Activated CD4-positive, alpha-beta T cell treated with anti-CD3 and anti-CD28 coated beads, Interleukin-2, amount 10 ng/mL, durations not matched to agents 24 days and 14 days (primary cell): ENCODE measurements at regions of chr18 and their contacts with region 1.

Region 1: DNA sequence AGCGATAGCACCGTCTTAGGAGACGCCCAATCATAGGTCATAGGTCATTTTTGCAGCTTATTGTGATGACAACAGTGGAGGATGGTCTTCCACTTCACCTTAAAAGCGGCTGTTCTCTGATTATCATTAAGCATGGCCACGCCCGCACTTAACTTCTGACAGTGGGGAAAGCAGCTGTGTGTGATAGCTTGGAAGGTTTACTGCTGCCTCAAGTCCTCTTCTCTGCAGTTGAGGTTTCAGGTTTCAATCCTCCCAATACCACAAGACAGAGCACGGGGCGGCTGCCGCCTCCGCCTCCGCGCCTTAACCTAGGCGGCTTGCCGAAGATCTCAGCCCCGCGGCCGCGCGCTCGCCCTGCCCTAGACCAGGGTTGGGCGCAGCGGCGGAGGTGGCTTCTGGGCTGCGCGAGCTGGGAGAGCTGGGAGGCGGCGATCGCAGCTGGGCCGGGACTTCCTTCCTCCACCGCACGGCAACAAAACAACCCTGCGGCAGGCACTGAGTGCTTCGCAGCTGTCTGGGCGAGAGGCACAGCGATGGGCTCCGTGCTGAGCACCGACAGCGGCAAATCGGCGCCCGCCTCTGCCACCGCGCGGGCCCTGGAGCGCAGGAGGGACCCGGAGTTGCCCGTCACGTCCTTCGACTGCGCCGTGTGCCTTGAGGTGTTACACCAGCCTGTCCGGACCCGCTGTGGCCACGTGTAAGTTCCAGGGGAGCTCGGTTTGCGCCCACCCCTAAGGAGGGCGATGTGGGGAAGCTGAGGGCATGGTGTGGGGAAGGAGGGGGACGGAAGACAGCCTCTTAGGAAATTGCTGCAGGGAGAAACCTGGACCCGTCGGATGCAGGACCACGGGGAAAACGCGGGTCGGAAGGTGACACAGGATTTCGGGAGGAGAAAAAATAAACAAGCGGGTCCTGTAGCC is at the start of gene RNF125:
- DNase-seq: peak; percentile 98
- H3K4me3 Mint-ChIP-seq: peak within 1 kb of the TSS; percentile 98
- H3K27ac Mint-ChIP-seq: peak within 1 kb of the TSS; percentile 99
- H3K4me1 Mint-ChIP-seq: peaks cover 37% of the 10 kb centered on the region
- H3K27me3 Mint-ChIP-seq: peaks cover 8% of the 10 kb centered on the region
- total RNA-seq, gene RNF125: 32.6 and 35.0 TPM in 2 replicates

Region 2: GRCh38 chr18:31658670-31659575 is 359.7 kb before region 1 on chr18:
- intact Hi-C with region 1: loop called (anchors 10 kb)
- DNase-seq: peak; percentile 73
- H3K4me3 Mint-ChIP-seq: peak overlapping the region; percentile 50
- H3K27ac Mint-ChIP-seq: peak overlapping the region; percentile 63
- H3K4me1 Mint-ChIP-seq: peaks cover 13% of the 10 kb centered on the region
- H3K27me3 Mint-ChIP-seq: peaks cover 4% of the 10 kb centered on the region

Region 3: GRCh38 chr18:31977270-31977872 is 41.2 kb before region 1 on chr18:
- intact Hi-C with region 1: no loop called
- DNase-seq: peak; percentile 75
- H3K4me3 Mint-ChIP-seq: no peak overlapping the region
- H3K27ac Mint-ChIP-seq: no peak overlapping the region
- H3K4me1 Mint-ChIP-seq: peaks cover 2% of the 10 kb centered on the region
- H3K27me3 Mint-ChIP-seq: peaks cover 3% of the 10 kb centered on the region

Region 4: GRCh38 chr18:32040936-32041335 is 22.3 kb after region 1 on chr18:
- intact Hi-C with region 1: loop called (anchors 1 kb)
- DNase-seq: peak; percentile 87
- H3K4me3 Mint-ChIP-seq: peak overlapping the region; percentile 63
- H3K27ac Mint-ChIP-seq: peak overlapping the region; percentile 72
- H3K4me1 Mint-ChIP-seq: peaks cover 51% of the 10 kb centered on the region
- H3K27me3 Mint-ChIP-seq: no peaks in the 10 kb centered on the region

Region 5: GRCh38 chr18:32086861-32087260 is 68.3 kb after region 1 on chr18:
- intact Hi-C with region 1: loop called (anchors 1 kb)
- DNase-seq: no peak
- H3K4me3 Mint-ChIP-seq: no peak overlapping the region
- H3K27ac Mint-ChIP-seq: no peak overlapping the region
- H3K4me1 Mint-ChIP-seq: peaks cover 45% of the 10 kb centered on the region
- H3K27me3 Mint-ChIP-seq: peaks cover 2% of the 10 kb centered on the region

Region 6: DNA sequence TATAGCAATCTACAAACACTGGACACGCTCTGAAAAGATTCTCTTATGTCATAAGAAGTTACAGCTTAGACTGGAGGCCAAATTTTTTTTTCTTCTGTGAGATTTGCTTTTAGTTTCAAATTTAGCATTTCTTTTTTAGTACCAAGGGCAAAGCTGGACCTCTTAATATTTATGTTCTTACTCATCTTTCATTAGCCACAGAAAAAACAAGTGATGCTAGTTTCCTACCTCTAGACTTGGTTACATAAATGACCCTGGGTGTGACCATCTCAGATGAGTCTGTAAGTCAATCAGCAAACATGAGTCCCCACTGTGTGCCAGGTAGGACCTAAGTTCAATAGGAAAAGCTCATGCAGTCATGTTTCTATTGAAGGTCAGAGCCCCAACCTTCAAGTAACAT is 265.7 kb after region 1 on chr18:
- intact Hi-C with region 1: no loop called
- DNase-seq: no peak
- H3K4me3 Mint-ChIP-seq: no peak overlapping the region
- H3K27ac Mint-ChIP-seq: no peak overlapping the region
- H3K4me1 Mint-ChIP-seq: no peaks in the 10 kb centered on the region
- H3K27me3 Mint-ChIP-seq: no peaks in the 10 kb centered on the region

Region 7: GRCh38 chr18:32530947-32531651 is 512.5 kb after region 1 on chr18:
- intact Hi-C with region 1: loop called (anchors 10 kb)
- DNase-seq: peak; percentile 70
- H3K4me3 Mint-ChIP-seq: no peak overlapping the region
- H3K27ac Mint-ChIP-seq: no peak overlapping the region
- H3K4me1 Mint-ChIP-seq: peaks cover 7% of the 10 kb centered on the region
- H3K27me3 Mint-ChIP-seq: peaks cover 21% of the 10 kb centered on the region